Transverse colon (tissue), 4 donors: ENCODE measurements at regions of chr14 and their contacts with region 1.

Region 1: GRCh38 chr14:32950584-32950983 is 11.9 kb downstream of the NPAS3 start:
- DNase-seq: no peak
- H3K4me3 ChIP-seq: no peak overlapping the region
- H3K27ac ChIP-seq: no peak overlapping the region
- H3K4me1 ChIP-seq: no peaks in the 10 kb centered on the region
- H3K27me3 ChIP-seq: no peaks in the 10 kb centered on the region
- CTCF ChIP-seq: no peak
- EP300 ChIP-seq: no peak
- POLR2A ChIP-seq: no peak

Region 2: DNA sequence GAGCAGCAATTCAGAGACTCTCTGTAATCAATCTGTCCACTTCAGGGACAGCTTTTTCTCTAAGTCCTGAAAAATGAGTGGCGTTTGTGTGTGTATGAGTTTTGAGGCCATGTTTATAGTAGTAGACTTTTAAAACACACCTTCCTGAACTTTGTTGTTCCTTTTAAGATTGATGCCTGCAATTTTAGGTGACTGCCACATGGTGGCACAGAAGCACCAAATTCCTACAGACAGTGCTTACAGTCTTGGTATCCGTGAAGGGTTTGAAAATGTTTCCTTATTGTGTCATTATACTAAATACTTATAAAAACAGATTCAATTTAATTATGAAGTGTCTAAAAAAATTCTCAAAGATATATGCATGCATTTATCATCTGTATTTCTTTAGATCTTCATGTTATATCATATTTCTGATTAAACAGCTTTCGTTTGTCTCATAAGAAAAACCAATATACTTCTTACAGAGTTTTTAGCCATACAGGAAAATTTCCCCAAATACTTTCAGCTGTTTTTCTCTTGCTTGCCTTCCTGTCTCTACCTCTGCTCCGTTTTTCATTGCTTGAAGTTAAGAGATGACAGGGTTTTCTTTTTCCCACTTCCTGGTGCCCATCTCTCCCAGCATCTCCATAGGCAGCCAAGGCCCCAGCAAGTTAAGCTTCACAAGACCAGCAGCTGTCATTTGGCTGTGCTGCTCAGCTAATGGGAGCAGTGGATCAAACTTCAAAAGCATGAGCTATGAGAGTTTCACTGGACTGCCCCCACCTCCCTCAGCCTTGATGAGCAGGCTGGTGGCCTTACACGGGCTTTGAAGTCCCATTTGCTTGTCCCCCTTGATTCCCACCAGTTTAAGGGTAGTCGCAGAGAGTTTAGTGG is 361.9 kb before region 1 on chr14:
- in situ Hi-C with region 1: no loop called
- intact Hi-C with region 1: loop called (anchors 5 kb)
- DNase-seq: no peak
- H3K4me3 ChIP-seq: no peak overlapping the region
- H3K27ac ChIP-seq: no peak overlapping the region
- H3K4me1 ChIP-seq: no peaks in the 10 kb centered on the region
- H3K27me3 ChIP-seq: no peaks in the 10 kb centered on the region
- CTCF ChIP-seq: peak; percentile 34 to 55 (median 48)
- EP300 ChIP-seq: no peak
- POLR2A ChIP-seq: no peak

Region 3: DNA sequence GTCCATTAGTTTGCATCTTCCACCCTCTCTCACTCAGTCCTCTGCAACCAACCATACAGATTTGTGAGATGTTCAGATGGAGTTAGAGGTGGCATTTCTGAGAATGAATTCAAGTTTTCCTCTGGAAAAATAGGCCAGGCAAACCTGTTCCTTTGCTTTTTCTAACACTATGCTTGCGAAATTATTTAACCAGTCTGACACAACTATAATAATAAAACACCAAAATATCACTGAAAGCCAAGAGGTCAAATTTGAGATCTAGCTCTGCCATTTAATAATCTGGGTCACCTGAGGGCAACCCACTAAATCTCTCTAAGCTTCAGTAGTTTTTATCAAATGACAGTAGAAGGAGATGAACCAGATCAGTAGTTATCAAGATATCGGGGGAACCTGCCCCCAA is 1330.0 kb after region 1 on chr14:
- in situ Hi-C with region 1: no loop called
- intact Hi-C with region 1: loop called (anchors 5 kb)
- DNase-seq: no peak
- H3K4me3 ChIP-seq: no peak overlapping the region
- H3K27ac ChIP-seq: no peak overlapping the region
- H3K4me1 ChIP-seq: no peaks in the 10 kb centered on the region
- H3K27me3 ChIP-seq: no peaks in the 10 kb centered on the region
- CTCF ChIP-seq: no peak
- EP300 ChIP-seq: no peak
- POLR2A ChIP-seq: no peak